A673 (cell line): ENCODE measurements at regions of chr6 and their contacts with region 1.

Region 1: DNA sequence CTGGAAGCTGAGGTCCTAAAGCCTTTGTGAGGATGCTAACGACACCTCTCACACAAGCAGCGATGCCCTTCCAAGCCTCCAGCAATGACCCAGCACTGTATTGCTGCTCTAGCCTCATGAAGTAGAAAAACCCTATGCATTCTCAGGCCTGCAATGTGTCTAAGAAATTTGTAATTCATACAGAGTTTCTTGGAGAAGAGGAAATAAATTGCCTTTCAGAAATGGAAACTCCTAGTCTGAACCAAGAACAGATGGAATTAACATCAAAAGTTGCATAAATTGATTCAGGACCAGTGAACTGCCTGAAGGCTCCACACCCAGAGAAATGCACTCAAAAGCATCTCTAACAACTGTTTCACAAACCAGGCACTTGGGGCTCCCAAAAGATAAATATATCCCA is 353.6 kb downstream of the ADGRB3 start:
- DNase-seq: no peak
- H3K4me3 ChIP-seq: no peak overlapping the region
- H3K27ac ChIP-seq: no peak overlapping the region
- H3K4me1 ChIP-seq: no peaks in the 10 kb centered on the region
- H3K27me3 ChIP-seq: no peaks in the 10 kb centered on the region
- CTCF ChIP-seq: no peak

Region 2: DNA sequence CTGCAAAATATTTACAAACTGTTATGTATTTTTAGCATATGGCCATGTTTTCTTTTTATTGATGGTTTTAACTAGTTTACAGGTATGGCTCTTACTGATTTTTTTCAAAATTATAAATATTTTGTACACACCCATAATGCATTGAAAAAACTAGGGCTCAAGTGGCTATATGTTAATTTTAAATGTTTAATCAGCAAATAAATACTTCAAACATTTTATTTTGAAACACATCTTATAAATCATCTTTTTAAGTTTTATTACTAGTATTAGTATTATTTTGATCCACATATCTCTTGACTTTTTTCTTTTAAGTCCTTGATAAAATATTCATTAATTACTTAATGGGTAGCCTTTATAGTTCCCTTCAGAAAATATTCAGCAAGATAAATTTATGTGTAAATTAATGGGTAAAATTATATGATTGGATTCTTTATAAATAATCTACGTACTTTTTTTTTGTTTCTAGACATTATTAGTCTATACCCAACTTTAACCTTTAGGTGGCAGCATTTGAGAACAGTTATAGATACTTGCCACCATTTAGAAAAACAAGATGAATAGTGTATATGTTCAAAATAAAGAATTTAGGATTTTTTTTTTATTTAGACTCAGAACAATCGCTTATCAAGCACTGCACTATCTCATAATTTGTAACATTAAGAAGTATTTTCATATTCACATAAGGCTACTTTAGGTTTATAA is 111.8 kb before region 1 on chr6:
- CTCF ChIA-PET with region 1: no interaction called
- POLR2A ChIA-PET with region 1: no interaction called
- intact Hi-C with region 1: no loop called
- DNase-seq: peak; percentile 61
- H3K4me3 ChIP-seq: no peak overlapping the region
- H3K27ac ChIP-seq: peak overlapping the region; percentile 56
- H3K4me1 ChIP-seq: peaks cover 59% of the 10 kb centered on the region
- H3K27me3 ChIP-seq: no peaks in the 10 kb centered on the region
- CTCF ChIP-seq: peak; percentile 59

Region 3: DNA sequence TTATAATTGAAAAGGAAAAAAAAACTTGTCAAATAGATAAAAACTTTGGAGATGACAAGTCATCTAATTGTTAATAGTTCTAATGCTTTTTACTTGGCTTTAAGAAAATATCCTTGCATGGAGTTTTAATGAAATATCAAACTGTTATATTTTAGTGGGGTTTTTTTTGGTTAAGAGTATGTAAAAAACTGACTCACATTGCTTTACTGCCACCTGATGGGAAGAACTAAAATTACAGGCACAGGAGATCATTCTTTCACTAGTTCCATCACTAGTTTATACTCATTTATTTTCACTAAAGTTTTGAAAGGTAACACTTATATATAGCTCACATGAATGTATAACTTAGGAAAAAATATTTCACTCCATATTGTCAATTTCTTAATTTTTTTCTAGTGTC is 499.0 kb after region 1 on chr6:
- CTCF ChIA-PET with region 1: no interaction called
- POLR2A ChIA-PET with region 1: no interaction called
- intact Hi-C with region 1: loop called (anchors 10 kb)
- DNase-seq: peak; percentile 36
- H3K4me3 ChIP-seq: no peak overlapping the region
- H3K27ac ChIP-seq: no peak overlapping the region
- H3K4me1 ChIP-seq: no peaks in the 10 kb centered on the region
- H3K27me3 ChIP-seq: no peaks in the 10 kb centered on the region
- CTCF ChIP-seq: peak; percentile 74